HCT116 (cell line): ENCODE measurements at regions of chr13 and their contacts with region 1.

Region 1: GRCh38 chr13:40069173-40070044 is 413.9 kb downstream of the COG6 start:
- DNase-seq: peak; percentile 44
- ATAC-seq: peak; percentile 99
- H3K4me3 ChIP-seq: no peak overlapping the region
- H3K27ac ChIP-seq: no peak overlapping the region
- H3K4me1 ChIP-seq: peaks cover 0 to 5% of the 10 kb centered on the region in 2 experiments; a peak in 2 of 4 replicates
- H3K27me3 ChIP-seq: no peaks in the 10 kb centered on the region
- CTCF ChIP-seq: peak; percentile 46 to 90 (median 90); a peak in 5 of 6 replicates
- POLR2A ChIP-seq: no peak
- RAD21 ChIP-seq: peak; percentile 76

Region 2: DNA sequence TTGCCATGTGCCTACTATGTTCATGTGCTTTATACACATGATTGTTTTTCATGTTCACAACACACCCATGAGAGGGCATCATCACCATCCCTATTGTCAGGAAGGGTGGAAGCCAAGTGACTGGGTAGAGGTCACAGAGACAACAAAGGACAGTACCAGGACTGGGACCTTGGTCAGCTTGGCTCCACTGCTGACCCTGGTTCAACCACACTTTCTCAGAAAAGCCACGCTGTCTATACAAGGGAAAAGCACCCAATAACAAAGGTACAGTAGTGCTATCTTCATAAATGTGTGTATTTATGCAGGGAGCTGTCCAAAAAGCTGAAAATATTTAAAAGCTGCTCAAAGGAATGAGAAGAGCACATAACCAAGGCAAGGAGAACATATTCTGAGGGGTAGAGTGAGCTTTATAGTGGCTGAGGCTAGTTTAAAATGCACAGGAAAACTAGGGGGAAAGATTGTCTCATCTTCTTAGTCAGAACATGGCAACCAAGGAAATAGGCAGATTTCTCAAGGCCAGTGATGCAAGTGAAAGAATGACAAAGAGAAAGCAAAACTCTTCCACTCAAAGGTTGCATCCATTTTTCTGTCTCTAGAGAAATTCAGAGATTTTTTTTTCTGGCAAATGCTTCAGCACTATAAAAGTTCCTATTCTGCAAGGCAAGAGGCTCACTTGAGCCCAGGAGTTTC is 182.1 kb after region 1 on chr13:
- CTCF ChIA-PET with region 1: no interaction called
- POLR2A ChIA-PET with region 1: no interaction called
- RAD21 ChIA-PET with region 1: no interaction called
- intact Hi-C with region 1: no loop called
- DNase-seq: no peak
- ATAC-seq: no peak
- H3K4me3 ChIP-seq: no peak overlapping the region
- H3K27ac ChIP-seq: no peak overlapping the region
- H3K4me1 ChIP-seq: peaks cover 0 to 5% of the 10 kb centered on the region in 2 experiments; a peak in 1 of 4 replicates
- H3K27me3 ChIP-seq: no peaks in the 10 kb centered on the region
- CTCF ChIP-seq: no peak
- POLR2A ChIP-seq: no peak
- RAD21 ChIP-seq: peak; percentile 24; the same call in 1 of the 2 replicates

Region 3: DNA sequence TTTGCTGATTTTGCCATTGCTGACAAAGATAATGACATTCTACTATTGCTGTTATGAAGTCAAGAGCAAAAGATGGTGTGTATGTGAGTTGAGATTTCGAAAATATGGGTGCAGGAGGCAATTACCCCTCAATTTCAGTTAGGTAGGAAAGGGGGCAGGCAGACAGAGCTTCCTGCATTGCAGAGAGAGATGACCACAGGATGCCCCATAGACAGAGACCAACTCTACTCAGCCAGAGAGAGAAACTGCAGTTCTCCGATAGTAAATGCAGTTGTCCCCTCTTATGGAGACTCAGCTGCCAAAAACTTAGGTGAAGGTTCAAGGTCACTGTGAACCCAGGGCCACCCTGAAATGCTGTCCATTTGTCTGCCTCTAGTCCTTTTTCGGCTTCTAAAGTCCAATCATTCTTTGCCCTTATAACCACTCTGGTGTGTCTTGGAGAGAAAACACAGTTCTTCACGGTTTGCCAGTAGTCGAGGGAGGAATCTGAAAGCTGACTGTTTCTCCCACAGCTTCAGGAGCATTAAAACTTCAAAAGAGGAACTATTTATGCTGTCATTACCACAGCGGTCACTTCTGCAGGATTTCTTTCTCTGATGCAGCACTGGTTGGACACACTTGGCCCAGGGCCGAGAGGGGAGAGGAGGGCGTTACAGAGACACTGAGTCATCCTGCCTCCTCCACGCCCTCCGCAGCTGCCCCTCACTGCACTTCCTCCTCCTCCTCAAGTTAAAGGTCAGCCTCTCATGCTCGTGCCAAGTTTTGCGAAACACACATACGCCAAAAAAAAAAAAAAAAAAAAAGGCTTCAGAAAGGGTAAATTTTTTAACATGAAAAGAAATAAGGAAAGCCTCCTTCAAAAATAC is 332.7 kb after region 1 on chr13:
- CTCF ChIA-PET with region 1: no interaction called
- POLR2A ChIA-PET with region 1: no interaction called
- RAD21 ChIA-PET with region 1: no interaction called
- intact Hi-C with region 1: loop called (anchors 10 kb)
- DNase-seq: peak; percentile 64
- ATAC-seq: peak; percentile 81
- H3K4me3 ChIP-seq: peak overlapping the region; percentile 6 to 32; a peak in 3 of 4 replicates
- H3K27ac ChIP-seq: peak overlapping the region; percentile 38; the same call in 1 of the 2 replicates
- H3K4me1 ChIP-seq: peaks cover 29 to 50% of the 10 kb centered on the region in 2 experiments
- H3K27me3 ChIP-seq: no peaks in the 10 kb centered on the region
- CTCF ChIP-seq: no peak
- POLR2A ChIP-seq: no peak
- RAD21 ChIP-seq: peak; percentile 11; the same call in 1 of the 2 replicates

Region 4: GRCh38 chr13:40671956-40672764 is 602.8 kb after region 1 on chr13:
- CTCF ChIA-PET with region 1: interaction called, 3 read pairs
- POLR2A ChIA-PET with region 1: no interaction called
- RAD21 ChIA-PET with region 1: no interaction called
- intact Hi-C with region 1: loop called (anchors 5 kb)
- DNase-seq: peak; percentile 57
- ATAC-seq: peak; percentile 83
- H3K4me3 ChIP-seq: no peak overlapping the region; a peak in 1 of 4 replicates
- H3K27ac ChIP-seq: no peak overlapping the region
- H3K4me1 ChIP-seq: peaks cover 14 to 28% of the 10 kb centered on the region in 2 experiments
- H3K27me3 ChIP-seq: no peaks in the 10 kb centered on the region
- CTCF ChIP-seq: no peak
- POLR2A ChIP-seq: no peak
- RAD21 ChIP-seq: no peak

Region 5: GRCh38 chr13:41554626-41555386 is 1485.4 kb after region 1 on chr13:
- CTCF ChIA-PET with region 1: no interaction called
- POLR2A ChIA-PET with region 1: no interaction called
- RAD21 ChIA-PET with region 1: no interaction called
- intact Hi-C with region 1: no loop called
- DNase-seq: no peak
- ATAC-seq: no peak
- H3K4me3 ChIP-seq: no peak overlapping the region
- H3K27ac ChIP-seq: no peak overlapping the region
- H3K4me1 ChIP-seq: no peaks in the 10 kb centered on the region
- H3K27me3 ChIP-seq: no peaks in the 10 kb centered on the region
- CTCF ChIP-seq: no peak
- POLR2A ChIP-seq: no peak
- RAD21 ChIP-seq: no peak